ENCODE measurements at regions of chr9 and their contacts with region 1.

Region 1: DNA sequence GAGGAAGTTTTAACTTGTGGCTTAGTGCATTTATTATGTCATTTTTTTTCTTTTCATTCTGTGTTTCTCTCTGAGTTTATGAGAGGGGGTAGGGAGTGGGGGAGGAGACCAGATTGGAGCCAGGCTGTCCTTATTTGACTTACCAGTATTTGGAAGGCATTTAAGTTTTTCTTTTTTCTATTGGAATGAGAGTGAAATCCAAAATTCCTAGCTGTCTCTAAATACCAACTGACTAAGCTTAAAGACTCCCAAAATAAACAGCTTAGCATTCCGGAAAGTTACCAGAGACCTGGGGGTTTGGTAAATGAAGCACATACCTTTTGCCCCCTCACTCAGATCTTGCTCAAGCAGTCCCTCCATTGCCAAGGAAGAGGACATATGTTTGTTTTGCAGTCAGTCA is 581.9 kb upstream of the BRINP1 start:
- DNase-seq: peak; percentile 72
- ATAC-seq: peak; percentile 82
- H3K4me3 ChIP-seq: no peak overlapping the region
- H3K27ac ChIP-seq: peak overlapping the region; percentile 99; the same call in 1 of the 2 replicates
- H3K4me1 ChIP-seq: peaks cover 16% of the 10 kb centered on the region
- H3K27me3 ChIP-seq: no peaks in the 10 kb centered on the region
- CTCF ChIP-seq: no peak
- POLR2A ChIP-seq: no peak
- RAD21 ChIP-seq: no peak

Region 2: GRCh38 chr9:119961774-119962424 is 10.8 kb after region 1 on chr9:
- CTCF ChIA-PET with region 1: interaction called, 3 read pairs
- POLR2A ChIA-PET with region 1: no interaction called
- dilution Hi-C with region 1: no loop called
- in situ Hi-C with region 1: no loop called
- intact Hi-C with region 1: loop called (anchors 1 kb)
- DNase-seq: peak; percentile 29
- ATAC-seq: 0 out of 2 replicates have a peak, but pooled peaks have one; percentile 21
- H3K4me3 ChIP-seq: no peak overlapping the region
- H3K27ac ChIP-seq: no peak overlapping the region
- H3K4me1 ChIP-seq: peaks cover 5% of the 10 kb centered on the region
- H3K27me3 ChIP-seq: no peaks in the 10 kb centered on the region
- CTCF ChIP-seq: peak; percentile 60
- POLR2A ChIP-seq: no peak
- RAD21 ChIP-seq: peak; percentile 53